Activated B cell treated with CpG ODN at 0.5 μM for 24 hours (primary cell): ENCODE measurements at regions of chr12 and their contacts with region 1.

Region 1: GRCh38 chr12:70242695-70243509 is at the start of gene CNOT2:
- DNase-seq: peak; percentile 86
- ATAC-seq: peak; percentile 88
- H3K4me3 Mint-ChIP-seq: peak within 1 kb of the TSS; percentile 99
- H3K27ac Mint-ChIP-seq: peak within 1 kb of the TSS; percentile 99
- H3K4me1 Mint-ChIP-seq: peaks cover 65% of the 10 kb centered on the region
- H3K27me3 Mint-ChIP-seq: no peaks in the 10 kb centered on the region
- CTCF ChIP-seq: no peak
- total RNA-seq, gene CNOT2: 92.4 and 98.1 TPM in 2 replicates

Region 2: GRCh38 chr12:69239352-69239921 is 1003.5 kb before region 1 on chr12 and contains the start of gene CPSF6:
- CTCF ChIA-PET with region 1: no interaction called
- POLR2A ChIA-PET with region 1: no interaction called
- intact Hi-C with region 1: loop called (anchors 5 kb)
- DNase-seq: peak; percentile 96
- ATAC-seq: peak; percentile 93
- H3K4me3 Mint-ChIP-seq: peak within 1 kb of the TSS; percentile 99
- H3K27ac Mint-ChIP-seq: peak within 1 kb of the TSS; percentile 96
- H3K4me1 Mint-ChIP-seq: peaks cover 51% of the 10 kb centered on the region
- H3K27me3 Mint-ChIP-seq: no peaks in the 10 kb centered on the region
- CTCF ChIP-seq: no peak
- total RNA-seq, gene CPSF6: 95.5 and 104 TPM in 2 replicates

Region 3: GRCh38 chr12:69585189-69586062 is 657.5 kb before region 1 on chr12 and contains the start of gene CCT2:
- CTCF ChIA-PET with region 1: no interaction called
- POLR2A ChIA-PET with region 1: no interaction called
- intact Hi-C with region 1: loop called (anchors 2 kb)
- DNase-seq: peak; percentile 91
- ATAC-seq: peak; percentile 90
- H3K4me3 Mint-ChIP-seq: peak within 1 kb of the TSS; percentile 96
- H3K27ac Mint-ChIP-seq: peak within 1 kb of the TSS; percentile 95
- H3K4me1 Mint-ChIP-seq: peaks cover 8% of the 10 kb centered on the region
- H3K27me3 Mint-ChIP-seq: no peaks in the 10 kb centered on the region
- CTCF ChIP-seq: no peak
- total RNA-seq, gene CCT2: 205 and 211 TPM in 2 replicates

Region 4: DNA sequence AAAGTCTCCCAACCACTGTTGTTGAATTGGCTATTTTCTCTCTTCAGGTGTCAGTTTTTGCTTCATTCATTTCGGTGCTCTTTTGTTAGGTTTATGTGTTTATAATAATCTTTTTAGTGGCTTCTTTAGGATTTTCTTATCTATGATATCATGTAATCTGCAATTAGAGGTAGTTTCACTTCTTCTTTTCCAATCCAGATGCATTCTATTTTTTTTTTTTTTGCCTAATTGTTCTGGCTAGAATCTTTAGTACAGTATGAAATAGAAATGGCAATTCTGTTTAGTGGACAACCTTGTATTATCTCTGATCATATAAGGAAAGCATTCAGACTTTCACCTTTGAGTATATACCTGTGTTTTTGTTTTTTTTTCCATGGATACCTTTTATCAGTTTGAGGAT is 17.7 kb after region 1 on chr12:
- CTCF ChIA-PET with region 1: no interaction called
- POLR2A ChIA-PET with region 1: no interaction called
- intact Hi-C with region 1: loop called (anchors 1 kb)
- DNase-seq: no peak
- ATAC-seq: peak; percentile 54
- H3K4me3 Mint-ChIP-seq: peak overlapping the region; percentile 53
- H3K27ac Mint-ChIP-seq: peak overlapping the region; percentile 77
- H3K4me1 Mint-ChIP-seq: peaks cover 65% of the 10 kb centered on the region
- H3K27me3 Mint-ChIP-seq: no peaks in the 10 kb centered on the region
- CTCF ChIP-seq: no peak

Region 5: GRCh38 chr12:70487440-70487839 is 244.5 kb after region 1 on chr12:
- CTCF ChIA-PET with region 1: no interaction called
- POLR2A ChIA-PET with region 1: interaction called, 3 read pairs
- intact Hi-C with region 1: loop called (anchors 10 kb)
- DNase-seq: no peak
- ATAC-seq: peak; percentile 40
- H3K4me3 Mint-ChIP-seq: no peak overlapping the region
- H3K27ac Mint-ChIP-seq: peak overlapping the region; percentile 38
- H3K4me1 Mint-ChIP-seq: peaks cover 38% of the 10 kb centered on the region
- H3K27me3 Mint-ChIP-seq: no peaks in the 10 kb centered on the region
- CTCF ChIP-seq: no peak

Region 6: DNA sequence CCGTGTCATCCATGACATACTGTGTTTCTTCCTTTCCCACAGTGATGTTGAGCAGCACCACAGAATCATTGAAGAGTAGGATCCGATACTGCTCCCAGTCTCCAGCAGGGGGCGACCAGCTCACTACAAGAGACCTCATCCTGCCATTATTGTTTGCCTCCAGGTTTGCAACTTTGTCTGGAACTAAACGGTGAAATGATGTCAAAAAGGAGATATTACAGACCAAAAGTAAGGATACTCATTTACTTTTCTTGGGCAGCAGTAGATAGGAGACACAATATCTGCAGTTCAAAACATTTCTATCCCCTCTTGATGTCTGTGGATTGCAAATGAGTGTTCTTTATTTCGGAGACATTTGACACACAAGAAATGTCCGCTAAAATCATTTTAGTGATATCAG is 347.1 kb after region 1 on chr12:
- CTCF ChIA-PET with region 1: no interaction called
- POLR2A ChIA-PET with region 1: no interaction called
- intact Hi-C with region 1: no loop called
- DNase-seq: no peak
- ATAC-seq: no peak
- H3K4me3 Mint-ChIP-seq: no peak overlapping the region
- H3K27ac Mint-ChIP-seq: no peak overlapping the region
- H3K4me1 Mint-ChIP-seq: no peaks in the 10 kb centered on the region
- H3K27me3 Mint-ChIP-seq: peaks cover 2% of the 10 kb centered on the region
- CTCF ChIP-seq: peak; percentile 24

Region 7: DNA sequence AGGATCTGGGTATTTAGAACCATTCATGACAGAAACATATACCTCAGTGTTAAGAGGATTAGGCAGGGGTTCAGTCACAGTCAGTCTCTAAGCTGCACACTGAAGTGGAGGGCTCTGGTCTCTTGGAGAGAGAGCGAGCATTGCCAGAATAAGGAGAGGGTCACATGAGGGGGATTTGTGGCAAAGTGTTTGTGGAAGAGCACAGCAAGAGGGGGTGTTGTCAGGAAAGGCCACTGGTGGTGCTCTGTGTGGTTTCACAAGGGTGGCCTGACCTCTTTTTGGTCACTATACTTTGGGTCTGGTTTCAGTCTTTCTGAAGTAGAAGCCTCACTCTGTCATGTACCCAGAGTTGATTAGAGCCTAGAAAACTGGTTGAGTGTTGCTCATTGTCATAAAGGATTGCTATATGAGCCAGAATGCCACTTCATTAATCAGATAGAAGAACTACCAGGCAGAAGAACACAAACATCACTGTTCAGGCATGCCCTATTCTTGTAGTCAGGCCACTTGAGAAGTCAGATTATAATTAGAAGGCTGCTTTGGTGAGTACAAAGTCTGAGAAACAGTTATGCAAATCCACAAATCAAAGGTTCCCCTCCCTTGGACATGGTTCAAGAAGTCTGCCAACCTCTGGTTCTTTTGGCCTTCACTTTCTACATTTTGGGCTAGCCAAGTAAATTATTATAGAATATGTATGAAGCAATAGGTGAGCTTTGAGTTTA is 1451.4 kb after region 1 on chr12:
- CTCF ChIA-PET with region 1: no interaction called
- POLR2A ChIA-PET with region 1: no interaction called
- intact Hi-C with region 1: loop called (anchors 10 kb)
- DNase-seq: no peak
- ATAC-seq: peak; percentile 83
- H3K4me3 Mint-ChIP-seq: peak overlapping the region; percentile 76
- H3K27ac Mint-ChIP-seq: peak overlapping the region; percentile 97
- H3K4me1 Mint-ChIP-seq: peaks cover 77% of the 10 kb centered on the region
- H3K27me3 Mint-ChIP-seq: no peaks in the 10 kb centered on the region
- CTCF ChIP-seq: no peak